ENCODE measurements at regions of chrX and their contacts with region 1.

Region 1: DNA sequence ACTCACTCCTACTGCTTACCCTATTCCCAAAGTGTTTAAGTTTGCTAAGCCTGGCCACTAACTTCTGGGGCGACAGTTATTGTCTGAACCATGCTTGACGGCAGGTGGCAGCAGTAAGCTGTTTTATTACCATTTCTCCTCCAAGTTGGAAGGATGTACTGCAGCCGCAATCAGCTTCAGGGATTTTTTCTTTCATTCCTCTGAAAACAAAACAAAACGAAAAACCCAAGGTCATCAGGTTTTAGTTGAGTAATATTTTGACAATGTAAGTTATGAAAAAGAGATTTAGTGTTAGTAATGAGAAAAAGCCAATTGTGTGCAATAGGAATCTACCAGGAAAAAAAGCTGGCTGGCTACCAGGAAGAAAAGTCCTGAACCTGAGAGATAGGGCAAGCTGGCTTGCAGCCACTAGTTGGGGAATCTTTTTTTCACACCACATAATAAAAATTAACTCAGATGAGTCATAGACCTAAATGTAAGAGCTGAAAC is 13.2 kb upstream of the RAB9B start:
- DNase-seq: peak; percentile 23 to 54 (median 36)
- ATAC-seq: peak; percentile 87
- H3K4me3 ChIP-seq: no peak overlapping the region
- H3K27ac ChIP-seq: no peak overlapping the region
- H3K4me1 ChIP-seq: no peaks in the 10 kb centered on the region
- H3K27me3 ChIP-seq: no peaks in the 10 kb centered on the region
- CTCF ChIP-seq: peak; percentile 60 to 63 (median 60)
- EP300 ChIP-seq: no peak
- POLR2A ChIP-seq: no peak
- RAD21 ChIP-seq: peak; percentile 41 to 60

Region 2: DNA sequence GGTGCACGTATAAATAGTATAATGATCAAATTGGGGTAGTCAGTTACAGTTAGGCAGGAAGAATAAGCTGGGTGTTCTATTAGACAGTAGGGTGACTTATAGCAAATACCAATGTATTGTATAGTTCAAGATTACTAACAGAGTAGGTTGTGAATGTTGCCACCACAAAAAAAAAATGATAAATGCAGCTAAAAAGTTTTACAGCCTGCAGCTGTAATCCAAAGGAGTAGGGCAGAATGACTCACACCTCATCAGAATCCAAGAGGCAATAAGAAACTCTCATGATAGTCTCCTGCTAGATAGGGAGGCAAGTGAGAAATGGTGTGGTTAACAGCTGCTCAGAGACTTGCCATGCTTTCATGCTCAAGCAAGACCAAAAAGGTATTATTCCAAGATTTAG is 279.5 kb before region 1 on chrX:
- CTCF ChIA-PET with region 1: no interaction called
- POLR2A ChIA-PET with region 1: no interaction called
- in situ Hi-C with region 1: no loop called
- intact Hi-C with region 1: no loop called
- DNase-seq: no peak
- ATAC-seq: no peak
- H3K4me3 ChIP-seq: no peak overlapping the region
- H3K27ac ChIP-seq: no peak overlapping the region
- H3K4me1 ChIP-seq: no peaks in the 10 kb centered on the region
- H3K27me3 ChIP-seq: no peaks in the 10 kb centered on the region
- CTCF ChIP-seq: no peak
- EP300 ChIP-seq: no peak
- POLR2A ChIP-seq: no peak
- RAD21 ChIP-seq: no peak

Region 3: GRCh38 chrX:103941201-103941975 is 96.2 kb after region 1 on chrX:
- CTCF ChIA-PET with region 1: no interaction called
- POLR2A ChIA-PET with region 1: no interaction called
- in situ Hi-C with region 1: no loop called
- intact Hi-C with region 1: loop called (anchors 1 kb)
- DNase-seq: peak; percentile 25 to 28 (median 26)
- ATAC-seq: peak; percentile 70
- H3K4me3 ChIP-seq: no peak overlapping the region
- H3K27ac ChIP-seq: no peak overlapping the region
- H3K4me1 ChIP-seq: peaks cover 0 to 3% of the 10 kb centered on the region in 2 experiments; a peak in 3 of 5 replicates
- H3K27me3 ChIP-seq: no peaks in the 10 kb centered on the region
- CTCF ChIP-seq: peak in 2 of 3 experiments; percentile 38 to 40; a peak in 4 of 6 replicates
- EP300 ChIP-seq: no peak
- POLR2A ChIP-seq: no peak
- RAD21 ChIP-seq: peak in 1 of 2 experiments; percentile 41; a peak in 2 of 4 replicates

Region 4: GRCh38 chrX:104136241-104137019 is 291.2 kb after region 1 on chrX:
- CTCF ChIA-PET with region 1: interaction called, 3 read pairs
- POLR2A ChIA-PET with region 1: no interaction called
- in situ Hi-C with region 1: no loop called
- intact Hi-C with region 1: loop called (anchors 2 kb)
- DNase-seq: peak; percentile 56 to 82 (median 61)
- ATAC-seq: peak; percentile 98
- H3K4me3 ChIP-seq: no peak overlapping the region
- H3K27ac ChIP-seq: no peak overlapping the region
- H3K4me1 ChIP-seq: no peaks in the 10 kb centered on the region
- H3K27me3 ChIP-seq: no peaks in the 10 kb centered on the region
- CTCF ChIP-seq: peak; percentile 67 to 71 (median 69)
- EP300 ChIP-seq: no peak
- POLR2A ChIP-seq: no peak
- RAD21 ChIP-seq: peak; percentile 30 to 67; a peak in 3 of 4 replicates

Measured in K562 (cell line).